ENCODE measurements at regions of chrX and their contacts with region 1.

Region 1: GRCh38 chrX:19772826-19773628 is 114.4 kb downstream of the SH3KBP1 start:
- DNase-seq: peak; percentile 38
- ATAC-seq: peak; percentile 57
- H3K4me3 ChIP-seq: no peak overlapping the region
- H3K4me3 Mint-ChIP-seq: peak overlapping the region; percentile 67
- H3K27ac ChIP-seq: peak overlapping the region; percentile 38 to 57
- H3K27ac Mint-ChIP-seq: peak overlapping the region; percentile 90
- H3K4me1 ChIP-seq: peaks cover 26 to 43% of the 10 kb centered on the region in 2 donors
- H3K4me1 Mint-ChIP-seq: peaks cover 58% of the 10 kb centered on the region
- H3K27me3 ChIP-seq: no peaks in the 10 kb centered on the region
- H3K27me3 Mint-ChIP-seq: no peaks in the 10 kb centered on the region
- CTCF ChIP-seq: no peak

Region 2: DNA sequence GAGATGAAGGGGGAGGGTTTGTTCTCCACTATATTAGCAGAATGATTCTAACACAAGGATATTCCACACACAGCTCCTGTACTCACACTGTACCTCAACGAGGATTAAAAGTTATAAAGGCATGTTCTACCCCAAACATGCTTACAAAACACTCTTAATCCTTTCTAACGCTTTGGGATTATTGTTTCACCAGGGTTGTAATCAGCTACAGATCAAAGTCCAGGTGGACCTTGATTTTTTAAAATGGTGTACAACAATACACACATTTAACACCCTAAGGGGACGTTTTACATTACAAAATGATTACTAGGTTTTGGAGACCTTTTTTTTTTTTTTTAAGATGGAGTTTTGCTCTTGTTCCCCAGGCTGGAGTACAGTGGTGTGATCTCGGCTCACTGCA is 207.4 kb before region 1 on chrX:
- CTCF ChIA-PET with region 1: no interaction called
- POLR2A ChIA-PET with region 1: interaction called, 11 read pairs
- intact Hi-C with region 1: no loop called
- DNase-seq: no peak
- ATAC-seq: no peak
- H3K4me3 ChIP-seq: no peak overlapping the region
- H3K4me3 Mint-ChIP-seq: no peak overlapping the region
- H3K27ac ChIP-seq: no peak overlapping the region
- H3K27ac Mint-ChIP-seq: peak overlapping the region; percentile 72
- H3K4me1 ChIP-seq: peaks cover 12 to 13% of the 10 kb centered on the region in 2 donors
- H3K4me1 Mint-ChIP-seq: peaks cover 22% of the 10 kb centered on the region
- H3K27me3 ChIP-seq: no peaks in the 10 kb centered on the region
- H3K27me3 Mint-ChIP-seq: no peaks in the 10 kb centered on the region
- CTCF ChIP-seq: no peak

Region 3: DNA sequence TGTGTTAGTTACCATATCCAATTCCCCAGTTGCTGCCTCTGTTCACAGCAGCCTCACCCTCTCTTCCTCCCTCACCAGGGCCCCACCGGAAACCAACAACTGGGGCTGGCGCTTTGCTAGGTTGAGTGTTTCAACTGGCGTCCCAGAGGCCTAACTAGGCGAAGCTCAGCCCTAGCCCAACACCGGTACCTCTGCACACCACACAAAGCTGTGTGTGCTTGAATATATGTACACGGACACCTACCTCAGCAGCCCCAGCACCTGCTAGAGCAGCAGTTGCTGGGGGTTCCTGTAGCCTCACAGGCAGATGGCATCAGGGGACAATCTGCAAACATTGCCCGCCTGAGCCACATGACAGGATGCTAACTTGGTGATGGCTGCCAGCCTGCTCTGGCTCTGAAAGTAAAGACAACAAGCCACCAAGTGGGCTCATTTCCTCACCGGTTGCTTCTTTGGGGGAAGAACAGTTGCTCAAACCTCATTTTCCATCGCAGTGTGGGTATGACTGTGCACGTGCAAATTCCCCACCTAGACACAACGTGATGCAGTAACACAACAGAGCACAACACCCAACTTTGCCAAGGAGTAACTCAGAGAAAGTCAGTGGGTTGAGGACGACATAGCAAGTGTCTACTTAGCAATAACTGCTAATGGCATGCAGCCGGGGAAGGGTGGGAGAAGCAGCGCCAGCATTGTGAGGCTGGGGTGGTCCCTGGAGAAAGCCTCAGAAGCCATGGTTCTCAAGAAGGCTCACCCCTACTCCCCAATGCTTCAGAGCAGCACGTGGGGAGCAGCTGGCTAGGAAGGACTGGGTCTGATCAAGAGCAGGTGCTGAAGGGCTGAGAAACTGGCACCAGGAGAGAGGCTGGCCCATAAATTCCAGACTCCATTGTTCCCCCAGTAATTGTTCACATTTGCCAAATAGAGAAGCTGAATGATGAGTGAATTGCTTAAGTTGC is 25.1 kb before region 1 on chrX:
- CTCF ChIA-PET with region 1: interaction called, 3 read pairs
- POLR2A ChIA-PET with region 1: interaction called, 8 read pairs
- intact Hi-C with region 1: loop called (anchors 2 kb)
- DNase-seq: peak; percentile 77
- ATAC-seq: peak; percentile 68
- H3K4me3 ChIP-seq: no peak overlapping the region
- H3K4me3 Mint-ChIP-seq: peak overlapping the region; percentile 67
- H3K27ac ChIP-seq: peak overlapping the region; percentile 85 to 87
- H3K27ac Mint-ChIP-seq: peak overlapping the region; percentile 98
- H3K4me1 ChIP-seq: peaks cover 64 to 90% of the 10 kb centered on the region in 2 donors
- H3K4me1 Mint-ChIP-seq: peaks cover 91% of the 10 kb centered on the region
- H3K27me3 ChIP-seq: no peaks in the 10 kb centered on the region
- H3K27me3 Mint-ChIP-seq: no peaks in the 10 kb centered on the region
- CTCF ChIP-seq: no peak

Region 4: DNA sequence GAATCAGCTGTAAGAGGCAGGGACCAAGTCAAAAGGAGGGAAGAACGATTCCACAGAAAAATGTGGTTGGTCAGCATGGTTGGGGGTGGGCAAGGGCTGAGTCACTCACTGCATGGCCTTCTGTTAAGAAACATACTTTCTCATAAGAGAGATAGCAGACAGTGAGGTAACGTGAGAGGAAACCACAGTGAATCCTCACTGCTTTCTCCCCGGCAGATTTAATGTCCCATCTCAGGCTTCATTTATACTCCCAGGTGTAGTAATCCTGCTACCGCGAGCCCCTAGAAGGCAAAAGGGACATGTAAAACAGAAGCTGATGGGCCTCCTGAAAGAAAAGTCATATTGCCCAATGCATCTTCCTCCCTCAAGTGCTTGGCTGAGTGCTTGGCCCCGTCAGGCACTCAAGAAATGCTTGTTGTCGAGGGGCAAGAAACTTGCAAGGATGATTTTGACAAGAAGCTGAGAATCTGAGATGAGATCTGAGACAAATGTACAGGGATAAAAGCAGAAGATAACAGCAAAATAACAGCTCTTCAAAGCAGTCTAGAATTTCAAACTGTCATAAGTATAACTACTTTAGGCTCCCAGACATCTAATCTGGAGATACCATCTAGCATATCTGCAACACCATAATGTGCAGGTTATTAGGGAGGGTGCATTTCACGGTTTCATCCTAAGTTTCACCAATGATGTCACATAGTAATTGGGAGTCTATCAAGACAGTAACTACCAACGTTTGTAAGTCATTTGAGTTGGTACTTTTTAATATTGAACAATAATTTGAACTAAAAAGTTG is 74.2 kb after region 1 on chrX:
- CTCF ChIA-PET with region 1: no interaction called
- POLR2A ChIA-PET with region 1: interaction called, 4 read pairs
- intact Hi-C with region 1: loop called (anchors 5 kb)
- DNase-seq: no peak
- ATAC-seq: no peak
- H3K4me3 ChIP-seq: no peak overlapping the region
- H3K4me3 Mint-ChIP-seq: peak overlapping the region; percentile 67
- H3K27ac ChIP-seq: peak overlapping the region in 1 of 2 donors; percentile 61
- H3K27ac Mint-ChIP-seq: peak overlapping the region; percentile 85
- H3K4me1 ChIP-seq: peaks cover 28 to 48% of the 10 kb centered on the region in 2 donors
- H3K4me1 Mint-ChIP-seq: peaks cover 62% of the 10 kb centered on the region
- H3K27me3 ChIP-seq: no peaks in the 10 kb centered on the region
- H3K27me3 Mint-ChIP-seq: no peaks in the 10 kb centered on the region
- CTCF ChIP-seq: no peak

Measured in B cell (primary cell).